Activated CD4-positive, alpha-beta memory T cell treated with anti-CD3 and anti-CD28 coated beads for 36 hours (primary cell): ENCODE measurements at regions of chr17 and their contacts with region 1.

Region 1: GRCh38 chr17:49230636-49231562 is at the start of gene PHOSPHO1:
- DNase-seq: peak; percentile 89
- H3K4me3 Mint-ChIP-seq: peak within 1 kb of the TSS; percentile 74
- H3K27ac Mint-ChIP-seq: no peak within 1 kb of the TSS
- H3K4me1 Mint-ChIP-seq: peaks cover 7% of the 10 kb centered on the region
- H3K27me3 Mint-ChIP-seq: peaks cover 17% of the 10 kb centered on the region
- total RNA-seq, gene PHOSPHO1: not detected

Region 2: DNA sequence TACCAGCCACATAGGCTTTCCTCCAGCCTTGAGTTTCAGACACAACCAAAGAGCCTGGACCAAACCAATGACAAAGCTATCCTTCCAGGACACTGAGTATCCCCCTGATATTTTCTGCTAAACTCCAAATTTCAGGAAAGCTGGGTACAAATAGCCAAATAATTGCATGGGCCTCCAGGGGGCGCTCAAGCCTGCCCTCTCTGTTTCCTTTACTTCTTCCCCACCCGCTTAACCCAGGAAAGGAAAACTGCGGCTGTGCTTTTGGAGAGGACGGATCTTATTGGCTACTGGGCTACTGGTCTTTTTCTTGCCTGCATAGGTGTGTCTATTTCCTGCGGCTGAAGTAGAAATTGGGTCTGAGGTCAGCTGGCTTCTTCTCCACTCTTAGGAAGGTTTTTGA is 50.6 kb before region 1 on chr17:
- CTCF ChIA-PET with region 1: interaction called, 187 read pairs
- POLR2A ChIA-PET with region 1: no interaction called
- intact Hi-C with region 1: loop called (anchors 1 kb)
- DNase-seq: peak; percentile 75
- H3K4me3 Mint-ChIP-seq: no peak overlapping the region
- H3K27ac Mint-ChIP-seq: no peak overlapping the region
- H3K4me1 Mint-ChIP-seq: peaks cover 2% of the 10 kb centered on the region
- H3K27me3 Mint-ChIP-seq: peaks cover 2% of the 10 kb centered on the region

Region 3: GRCh38 chr17:49210158-49211029 is 20.5 kb before region 1 on chr17 and contains the starts of genes ABI3 and GNGT2:
- CTCF ChIA-PET with region 1: interaction called, 32 read pairs
- POLR2A ChIA-PET with region 1: interaction called, 3 read pairs
- intact Hi-C with region 1: no loop called
- DNase-seq: peak; percentile 83
- H3K4me3 Mint-ChIP-seq: peak within 1 kb of the TSS; percentile 90
- H3K27ac Mint-ChIP-seq: peak within 1 kb of the TSS; percentile 91
- H3K4me1 Mint-ChIP-seq: peaks cover 56% of the 10 kb centered on the region
- H3K27me3 Mint-ChIP-seq: no peaks in the 10 kb centered on the region
- total RNA-seq, gene ABI3: 19.7 to 19.8 TPM
- total RNA-seq, gene GNGT2: 23.2 to 29.0 TPM

Region 4: GRCh38 chr17:49217651-49218413 is 13.1 kb before region 1 on chr17:
- CTCF ChIA-PET with region 1: interaction called, 32 read pairs
- POLR2A ChIA-PET with region 1: no interaction called
- intact Hi-C with region 1: no loop called
- DNase-seq: peak; percentile 72
- H3K4me3 Mint-ChIP-seq: peak overlapping the region; percentile 49
- H3K27ac Mint-ChIP-seq: peak overlapping the region; percentile 79
- H3K4me1 Mint-ChIP-seq: peaks cover 62% of the 10 kb centered on the region
- H3K27me3 Mint-ChIP-seq: no peaks in the 10 kb centered on the region

Region 5: GRCh38 chr17:49290690-49291359 is 59.9 kb after region 1 on chr17:
- CTCF ChIA-PET with region 1: interaction called, 14 read pairs
- POLR2A ChIA-PET with region 1: no interaction called
- intact Hi-C with region 1: no loop called
- DNase-seq: no peak
- H3K4me3 Mint-ChIP-seq: no peak overlapping the region
- H3K27ac Mint-ChIP-seq: no peak overlapping the region
- H3K4me1 Mint-ChIP-seq: peaks cover 15% of the 10 kb centered on the region
- H3K27me3 Mint-ChIP-seq: no peaks in the 10 kb centered on the region

Region 6: DNA sequence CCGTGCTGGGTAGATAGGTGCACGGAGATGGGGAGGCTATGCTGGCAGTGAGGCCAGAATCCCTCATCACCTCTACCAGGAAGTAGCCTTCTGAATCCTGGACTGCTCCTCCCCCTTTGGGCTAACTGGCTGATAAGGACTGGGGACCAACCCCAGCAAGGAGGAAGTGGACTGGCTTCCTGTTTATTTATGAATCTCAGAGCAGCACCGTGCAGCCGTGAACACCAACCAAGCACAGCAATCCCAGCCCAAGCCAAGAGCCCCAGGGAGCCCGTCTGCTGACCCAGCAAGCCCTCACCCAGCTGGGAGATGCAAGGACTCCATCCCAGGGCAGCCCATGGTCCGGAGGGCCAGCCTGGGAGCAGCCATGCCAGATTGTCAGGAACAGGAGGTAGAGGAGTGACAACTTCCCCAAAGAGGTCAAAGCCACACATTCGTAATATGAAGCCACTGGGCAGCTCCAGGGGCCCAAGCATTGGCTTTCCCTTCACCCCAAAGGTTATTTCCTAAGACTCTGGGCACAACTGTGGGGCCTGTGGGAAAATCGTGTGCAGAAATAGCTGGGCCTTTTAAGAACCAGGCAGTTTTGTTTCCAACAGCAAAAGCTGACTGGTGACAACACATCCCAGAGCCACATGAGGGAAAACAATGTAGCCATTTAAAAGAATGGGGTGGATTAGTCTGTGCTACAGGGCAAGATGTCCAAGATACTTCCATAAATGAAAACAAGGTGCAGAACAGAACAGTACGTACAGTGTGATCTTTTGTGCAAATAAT is 159.8 kb after region 1 on chr17:
- CTCF ChIA-PET with region 1: no interaction called
- POLR2A ChIA-PET with region 1: no interaction called
- intact Hi-C with region 1: loop called (anchors 2 kb)
- DNase-seq: peak; percentile 33
- H3K4me3 Mint-ChIP-seq: no peak overlapping the region
- H3K27ac Mint-ChIP-seq: peak overlapping the region; percentile 71
- H3K4me1 Mint-ChIP-seq: peaks cover 53% of the 10 kb centered on the region
- H3K27me3 Mint-ChIP-seq: no peaks in the 10 kb centered on the region